ENCODE measurements at regions of chrX and their contacts with region 1.

Region 1: GRCh38 chrX:47361538-47362511 is 8.6 kb upstream of the ZNF157 start:
- DNase-seq: peak; percentile 93
- H3K4me3 ChIP-seq: peak overlapping the region; percentile 43 to 56 (median 48)
- H3K27ac ChIP-seq: peak overlapping the region; percentile 74 to 84 (median 78)
- H3K4me1 ChIP-seq: peaks cover 0 to 6% (median 0%) of the 10 kb centered on the region in 4 donors
- H3K27me3 ChIP-seq: no peaks in the 10 kb centered on the region
- CTCF ChIP-seq: peak in 1 of 3 experiments; percentile 27
- EP300 ChIP-seq: no peak
- POLR2A ChIP-seq: no peak

Region 2: DNA sequence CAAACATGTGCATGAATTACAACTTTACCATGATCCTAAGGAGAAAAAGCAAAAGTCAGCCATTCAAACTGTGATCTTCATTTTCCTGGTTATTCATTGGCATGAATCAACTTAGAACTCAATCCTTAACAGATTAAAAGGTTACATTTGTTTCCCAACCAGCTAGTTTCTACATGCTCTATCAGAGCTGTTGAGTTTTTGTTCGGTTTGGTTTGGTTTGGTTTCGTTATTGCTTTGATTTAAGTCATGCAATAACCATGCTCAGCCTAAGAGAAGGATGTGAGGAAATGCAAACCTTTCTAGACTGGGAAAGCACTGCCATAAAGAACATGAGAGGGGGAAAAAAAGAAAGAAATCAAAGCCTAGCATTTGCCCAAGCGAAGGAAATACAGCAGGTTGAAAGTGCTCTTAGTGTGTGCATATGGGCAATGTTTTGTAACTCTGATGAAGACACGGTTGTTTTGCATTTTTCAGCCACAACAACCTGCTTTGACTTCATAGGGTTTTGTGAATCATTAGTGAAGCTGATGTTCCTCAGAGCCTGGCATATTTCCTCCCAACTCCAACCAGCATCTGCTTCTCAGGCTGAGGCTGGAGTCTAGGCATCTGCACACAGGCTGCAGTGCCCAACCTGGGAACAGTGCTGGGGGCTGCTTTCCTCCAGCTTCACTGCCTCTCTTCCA is 1050.9 kb before region 1 on chrX:
- intact Hi-C with region 1: no loop called
- DNase-seq: no peak
- H3K4me3 ChIP-seq: no peak overlapping the region
- H3K27ac ChIP-seq: no peak overlapping the region
- H3K4me1 ChIP-seq: no peaks in the 10 kb centered on the region
- H3K27me3 ChIP-seq: no peaks in the 10 kb centered on the region
- CTCF ChIP-seq: no peak
- EP300 ChIP-seq: no peak
- POLR2A ChIP-seq: no peak

Region 3: GRCh38 chrX:47235691-47236103 is 126.1 kb before region 1 on chrX:
- intact Hi-C with region 1: loop called (anchors 5 kb)
- DNase-seq: no peak
- H3K4me3 ChIP-seq: no peak overlapping the region
- H3K27ac ChIP-seq: peak overlapping the region; percentile 89 to 96 (median 92)
- H3K4me1 ChIP-seq: peaks cover 0 to 30% (median 16%) of the 10 kb centered on the region in 4 donors
- H3K27me3 ChIP-seq: no peaks in the 10 kb centered on the region
- CTCF ChIP-seq: no peak
- EP300 ChIP-seq: no peak
- POLR2A ChIP-seq: no peak

Region 4: GRCh38 chrX:47278691-47279090 is 83.1 kb before region 1 on chrX:
- intact Hi-C with region 1: no loop called
- DNase-seq: no peak
- H3K4me3 ChIP-seq: no peak overlapping the region
- H3K27ac ChIP-seq: no peak overlapping the region
- H3K4me1 ChIP-seq: no peaks in the 10 kb centered on the region
- H3K27me3 ChIP-seq: peaks cover 0 to 3% (median 0%) of the 10 kb centered on the region in 4 donors
- CTCF ChIP-seq: no peak
- EP300 ChIP-seq: no peak
- POLR2A ChIP-seq: no peak

Region 5: DNA sequence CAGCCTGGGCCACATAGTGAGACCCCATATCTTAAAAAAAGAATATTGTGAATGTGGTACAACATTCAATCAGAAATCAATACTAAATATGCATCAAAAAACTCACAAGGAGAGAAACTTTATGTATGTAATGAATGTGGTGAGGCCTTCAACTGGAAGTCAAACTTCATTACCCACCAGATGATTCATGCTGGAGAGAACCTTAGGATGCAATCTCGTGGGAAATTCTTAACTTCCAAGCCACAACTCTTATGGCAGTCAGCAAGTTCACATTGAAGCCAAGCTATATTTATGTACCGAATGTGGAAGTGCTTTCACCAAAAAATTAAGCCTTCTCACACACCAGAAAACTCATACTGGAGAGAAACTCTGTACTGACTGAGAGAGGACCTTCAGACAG is 381.7 kb after region 1 on chrX:
- intact Hi-C with region 1: no loop called
- DNase-seq: no peak
- H3K4me3 ChIP-seq: no peak overlapping the region
- H3K27ac ChIP-seq: no peak overlapping the region
- H3K4me1 ChIP-seq: no peaks in the 10 kb centered on the region
- H3K27me3 ChIP-seq: no peaks in the 10 kb centered on the region
- CTCF ChIP-seq: no peak
- EP300 ChIP-seq: no peak
- POLR2A ChIP-seq: no peak